ENCODE measurements at regions of chr2 and their contacts with region 1.

Region 1: GRCh38 chr2:25314514-25315315 is 27.0 kb downstream of the DNMT3A start:
- DNase-seq: peak; percentile 85
- H3K4me3 Mint-ChIP-seq: peak overlapping the region; percentile 74
- H3K27ac Mint-ChIP-seq: peak overlapping the region; percentile 90
- H3K4me1 Mint-ChIP-seq: peaks cover 59% of the 10 kb centered on the region
- H3K27me3 Mint-ChIP-seq: no peaks in the 10 kb centered on the region

Region 2: GRCh38 chr2:25071966-25072365 is 242.7 kb before region 1 on chr2:
- CTCF ChIA-PET with region 1: no interaction called
- POLR2A ChIA-PET with region 1: no interaction called
- DNase-seq: no peak
- H3K4me3 Mint-ChIP-seq: no peak overlapping the region
- H3K27ac Mint-ChIP-seq: no peak overlapping the region
- H3K4me1 Mint-ChIP-seq: no peaks in the 10 kb centered on the region
- H3K27me3 Mint-ChIP-seq: peaks cover 6% of the 10 kb centered on the region

Region 3: DNA sequence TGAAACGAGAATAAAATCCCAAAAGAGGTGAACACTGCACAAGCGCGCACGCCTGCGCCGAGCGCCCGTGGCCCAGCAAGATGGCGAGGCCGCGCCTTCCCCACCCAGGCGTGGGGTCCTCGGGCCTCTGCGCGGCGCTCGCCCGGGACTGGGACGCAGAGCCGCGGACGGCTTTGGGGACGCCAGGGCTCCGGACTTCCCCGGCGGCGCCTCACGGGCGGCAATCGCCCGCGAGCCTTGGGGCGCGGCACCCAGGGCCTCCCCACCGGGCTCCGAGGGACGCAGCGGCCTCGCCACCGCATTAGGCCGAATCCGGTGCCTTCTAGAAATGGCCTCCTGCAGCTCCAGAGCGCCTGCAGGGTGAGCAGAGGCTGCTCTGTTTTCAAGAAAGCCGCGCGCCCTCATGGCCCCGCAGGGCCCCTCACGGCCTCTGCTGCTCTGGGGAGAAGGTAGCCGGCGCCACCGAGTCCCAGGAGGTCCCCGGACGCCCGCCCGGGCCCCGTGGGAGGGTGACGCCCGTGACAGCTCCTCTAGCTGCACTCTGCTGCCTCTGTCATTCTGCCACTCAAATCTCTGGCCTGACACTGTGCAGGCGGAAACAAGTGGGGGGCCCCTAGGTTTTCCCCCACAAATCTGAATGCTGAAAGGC is 110.4 kb before region 1 on chr2:
- CTCF ChIA-PET with region 1: no interaction called
- POLR2A ChIA-PET with region 1: no interaction called
- DNase-seq: no peak
- H3K4me3 Mint-ChIP-seq: no peak overlapping the region
- H3K27ac Mint-ChIP-seq: no peak overlapping the region
- H3K4me1 Mint-ChIP-seq: peaks cover 10% of the 10 kb centered on the region
- H3K27me3 Mint-ChIP-seq: peaks cover 2% of the 10 kb centered on the region

Region 4: GRCh38 chr2:25276569-25277465 is 37.9 kb before region 1 on chr2:
- CTCF ChIA-PET with region 1: interaction called, 8 read pairs
- POLR2A ChIA-PET with region 1: interaction called, 29 read pairs
- DNase-seq: peak; percentile 79
- H3K4me3 Mint-ChIP-seq: peak overlapping the region; percentile 53
- H3K27ac Mint-ChIP-seq: peak overlapping the region; percentile 82
- H3K4me1 Mint-ChIP-seq: peaks cover 65% of the 10 kb centered on the region
- H3K27me3 Mint-ChIP-seq: no peaks in the 10 kb centered on the region

Region 5: DNA sequence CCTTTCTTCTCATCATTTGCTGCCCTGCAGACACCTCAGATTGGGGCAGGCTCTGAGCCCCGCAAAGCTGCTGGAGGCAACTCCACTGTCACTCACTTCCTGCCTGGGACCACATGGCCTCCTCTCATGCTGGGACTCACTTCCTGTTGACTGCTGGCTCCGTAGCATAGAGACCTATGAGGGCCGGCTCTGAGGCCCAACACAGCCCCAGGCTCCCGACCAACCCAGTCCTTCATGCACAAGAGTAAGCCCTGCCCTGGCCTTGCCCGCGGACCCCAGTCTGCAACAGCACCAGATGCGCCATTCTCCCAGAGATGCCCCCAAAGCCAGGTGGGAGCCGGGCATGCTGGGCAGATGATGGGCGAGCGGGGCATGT is 28.7 kb before region 1 on chr2:
- CTCF ChIA-PET with region 1: interaction called, 4 read pairs
- POLR2A ChIA-PET with region 1: interaction called, 26 read pairs
- DNase-seq: peak; percentile 85
- H3K4me3 Mint-ChIP-seq: peak overlapping the region; percentile 44
- H3K27ac Mint-ChIP-seq: peak overlapping the region; percentile 90
- H3K4me1 Mint-ChIP-seq: peaks cover 31% of the 10 kb centered on the region
- H3K27me3 Mint-ChIP-seq: no peaks in the 10 kb centered on the region

Region 6: GRCh38 chr2:25294573-25295462 is 19.9 kb before region 1 on chr2:
- CTCF ChIA-PET with region 1: no interaction called
- POLR2A ChIA-PET with region 1: interaction called, 48 read pairs
- DNase-seq: peak; percentile 90
- H3K4me3 Mint-ChIP-seq: peak overlapping the region; percentile 62
- H3K27ac Mint-ChIP-seq: peak overlapping the region; percentile 94
- H3K4me1 Mint-ChIP-seq: peaks cover 38% of the 10 kb centered on the region
- H3K27me3 Mint-ChIP-seq: no peaks in the 10 kb centered on the region

Region 7: GRCh38 chr2:25301453-25302352 is 13.0 kb before region 1 on chr2:
- CTCF ChIA-PET with region 1: interaction called, 12 read pairs
- POLR2A ChIA-PET with region 1: interaction called, 54 read pairs
- DNase-seq: peak; percentile 88
- H3K4me3 Mint-ChIP-seq: peak overlapping the region; percentile 9
- H3K27ac Mint-ChIP-seq: peak overlapping the region; percentile 63
- H3K4me1 Mint-ChIP-seq: peaks cover 36% of the 10 kb centered on the region
- H3K27me3 Mint-ChIP-seq: no peaks in the 10 kb centered on the region

Region 8: DNA sequence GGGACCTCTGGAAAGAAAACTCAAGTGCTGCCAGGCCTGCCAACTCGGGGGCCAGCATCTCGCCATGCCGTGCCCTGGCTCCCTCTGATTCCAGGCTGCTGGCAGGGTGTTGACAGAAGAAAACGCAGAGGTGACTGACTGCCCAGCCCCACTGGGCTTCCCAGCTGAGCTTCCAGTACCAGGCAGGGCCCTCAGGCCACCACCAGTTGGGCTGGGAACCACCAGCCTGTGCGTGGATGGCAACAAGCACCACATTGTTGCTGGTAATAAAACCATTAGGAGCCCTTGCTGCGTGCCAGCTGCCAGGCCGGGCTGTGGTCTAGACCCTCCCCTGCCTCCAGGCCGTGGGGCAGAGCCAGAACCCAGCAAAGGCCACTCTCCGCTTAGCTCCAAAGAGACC is 17.9 kb after region 1 on chr2:
- CTCF ChIA-PET with region 1: interaction called, 7 read pairs
- POLR2A ChIA-PET with region 1: interaction called, 26 read pairs
- DNase-seq: no peak
- H3K4me3 Mint-ChIP-seq: no peak overlapping the region
- H3K27ac Mint-ChIP-seq: no peak overlapping the region
- H3K4me1 Mint-ChIP-seq: peaks cover 42% of the 10 kb centered on the region
- H3K27me3 Mint-ChIP-seq: no peaks in the 10 kb centered on the region

Region 9: DNA sequence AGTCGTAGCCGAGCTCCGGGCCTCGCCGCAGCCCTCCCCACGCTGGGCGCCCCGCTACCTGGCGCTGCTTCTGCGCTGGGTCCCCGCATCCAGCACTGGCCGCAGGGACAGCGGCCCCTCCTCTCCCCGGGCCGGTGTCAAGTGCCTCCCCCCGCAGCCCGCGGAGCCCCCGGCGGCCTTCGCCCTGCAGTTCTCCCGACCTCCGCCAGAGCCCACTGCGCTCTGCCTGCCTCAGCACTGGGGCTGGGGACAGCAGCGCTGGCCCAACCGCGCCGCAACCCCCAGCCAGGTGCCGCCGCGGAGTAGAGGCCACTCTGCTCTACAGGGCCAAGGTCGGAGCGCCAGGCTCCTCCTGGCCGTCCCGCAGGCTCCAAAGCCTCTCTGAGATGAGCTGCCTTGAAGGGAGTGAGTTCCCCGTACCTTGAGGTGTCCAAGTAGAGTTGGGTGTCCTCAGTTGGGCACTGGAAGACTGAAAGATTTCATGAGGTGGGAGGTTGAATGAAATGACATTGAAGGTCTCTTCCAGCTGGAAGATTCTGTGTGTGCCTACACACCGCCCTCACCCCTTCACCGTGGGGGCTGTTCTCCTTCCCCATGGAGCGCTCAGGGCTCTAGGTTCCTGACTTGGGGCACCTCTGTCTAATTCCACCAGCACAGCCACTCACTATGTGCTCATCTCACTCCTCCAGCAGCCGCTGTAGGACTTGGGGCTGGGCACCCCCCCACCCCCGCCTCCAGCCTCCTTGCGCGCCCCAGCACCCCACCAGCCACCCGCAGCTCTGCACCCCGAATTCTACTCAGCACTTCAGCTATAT is 27.9 kb after region 1 on chr2:
- CTCF ChIA-PET with region 1: interaction called, 5 read pairs
- POLR2A ChIA-PET with region 1: interaction called, 10 read pairs
- DNase-seq: peak; percentile 84
- H3K4me3 Mint-ChIP-seq: peak overlapping the region; percentile 83
- H3K27ac Mint-ChIP-seq: peak overlapping the region; percentile 62
- H3K4me1 Mint-ChIP-seq: peaks cover 24% of the 10 kb centered on the region
- H3K27me3 Mint-ChIP-seq: peaks cover 1% of the 10 kb centered on the region